Psoas muscle (tissue), 8 donors: ENCODE measurements at regions of chr15 and their contacts with region 1.

Region 1: DNA sequence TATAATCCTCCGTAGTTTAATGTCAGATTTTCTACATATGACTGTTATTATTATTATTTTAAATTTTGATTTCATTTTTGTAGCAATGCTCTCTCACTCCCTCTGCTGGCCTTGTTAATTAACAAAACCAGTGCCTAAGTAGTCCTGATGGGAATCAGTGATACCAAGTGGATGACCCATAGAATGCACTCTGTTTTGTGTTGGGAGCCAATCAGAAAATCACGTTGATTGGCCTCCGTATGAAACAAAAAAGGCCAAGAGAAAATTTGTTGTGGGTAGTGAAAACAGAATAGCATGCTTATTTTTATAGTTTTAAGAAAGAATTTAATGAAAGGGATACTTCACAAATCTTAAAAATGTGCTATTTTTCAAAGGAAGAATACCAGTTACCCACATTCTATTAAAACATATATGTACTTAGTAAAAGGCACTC is 34.4 kb upstream of the MEIS2 start:
- DNase-seq: no peak
- ATAC-seq: peak in 3 of 4 donors; percentile 50 to 82 (median 74)
- H3K4me3 ChIP-seq: no peak overlapping the region
- H3K27ac ChIP-seq: no peak overlapping the region
- H3K4me1 ChIP-seq: no peaks in the 10 kb centered on the region
- H3K27me3 ChIP-seq: no peaks in the 10 kb centered on the region
- CTCF ChIP-seq: peak; percentile 75

Region 2: DNA sequence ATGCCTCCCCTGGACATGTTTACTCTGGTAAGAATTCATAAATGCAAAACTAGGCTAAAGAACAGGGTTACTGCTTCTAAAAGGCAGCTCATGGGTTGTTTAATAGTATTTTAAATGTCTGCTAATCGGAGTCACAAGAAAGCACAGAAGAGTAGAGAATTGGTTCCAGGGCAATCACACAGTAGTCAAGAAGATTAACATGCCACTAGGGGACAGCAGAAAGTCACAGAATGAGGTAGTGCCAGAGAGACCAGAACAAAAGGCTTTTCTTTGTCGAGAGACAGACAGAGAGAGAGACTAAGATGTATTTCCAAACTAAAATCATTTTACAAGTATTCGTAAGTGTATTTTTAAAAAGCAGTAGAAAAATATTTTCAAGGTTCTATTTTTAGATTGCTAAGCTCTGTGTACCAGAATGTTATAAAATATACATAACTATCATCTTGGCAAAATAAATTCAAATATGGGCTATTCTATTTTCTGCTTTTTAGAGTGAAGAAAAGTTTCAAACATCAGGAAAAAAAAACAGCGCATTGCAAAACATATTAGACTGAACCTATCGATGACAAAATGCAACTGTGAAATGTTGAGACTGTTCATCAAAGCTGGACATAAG is 633.5 kb before region 1 on chr15:
- intact Hi-C with region 1: loop called in 1 of 2 experiments (anchors 2 kb)
- DNase-seq: no peak
- ATAC-seq: peak; percentile 83 to 95 (median 94)
- H3K4me3 ChIP-seq: no peak overlapping the region
- H3K27ac ChIP-seq: no peak overlapping the region
- H3K4me1 ChIP-seq: no peaks in the 10 kb centered on the region
- H3K27me3 ChIP-seq: peaks cover 0 to 11% (median 0%) of the 10 kb centered on the region in 3 donors
- CTCF ChIP-seq: peak; percentile 84

Region 3: DNA sequence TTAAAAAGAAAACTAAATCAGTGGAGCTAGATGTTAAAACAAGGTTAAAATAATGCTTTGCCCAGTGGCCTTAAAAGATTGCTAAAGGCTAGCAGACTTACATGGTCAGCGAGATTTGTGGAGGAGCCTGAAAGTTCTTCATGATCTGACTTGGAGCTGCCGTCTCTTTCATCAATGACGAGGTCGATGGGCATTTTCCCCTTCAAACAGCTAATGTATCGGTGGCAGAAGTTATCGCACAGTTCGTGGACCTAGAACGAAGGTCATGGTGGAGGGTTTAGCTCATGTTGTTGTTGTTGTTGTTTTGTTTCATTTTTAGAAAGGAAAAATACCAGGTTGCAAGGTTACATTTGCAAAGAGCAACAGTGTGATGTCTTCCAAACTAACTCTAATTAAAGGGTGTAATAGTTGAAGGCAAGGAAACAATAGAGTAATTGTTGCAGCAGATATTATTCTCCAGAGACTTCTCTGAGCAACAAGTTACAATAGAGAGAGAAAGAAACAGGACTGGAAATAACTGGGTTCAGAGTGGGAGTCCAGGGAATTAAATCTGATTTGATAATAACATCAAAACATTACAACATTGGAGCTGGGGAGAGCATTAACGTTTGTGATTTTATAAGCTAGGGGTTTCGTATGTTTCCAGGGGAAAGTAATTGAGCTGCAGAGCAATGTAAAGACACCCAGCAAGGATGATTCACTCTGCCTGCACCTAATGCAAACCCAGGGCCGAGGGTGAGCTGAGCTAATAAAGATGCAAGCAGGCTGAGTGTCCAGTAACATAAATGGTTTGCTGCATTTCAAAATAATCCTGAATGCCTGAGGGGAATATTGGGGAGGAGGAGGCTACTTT is 41.0 kb before region 1 on chr15:
- intact Hi-C with region 1: loop called in 1 of 2 experiments (anchors 5 kb)
- DNase-seq: no peak
- ATAC-seq: no peak
- H3K4me3 ChIP-seq: no peak overlapping the region
- H3K27ac ChIP-seq: no peak overlapping the region
- H3K4me1 ChIP-seq: no peaks in the 10 kb centered on the region
- H3K27me3 ChIP-seq: peaks cover 0 to 9% (median 5%) of the 10 kb centered on the region in 3 donors
- CTCF ChIP-seq: no peak